Activated CD8-positive, alpha-beta T cell treated with anti-CD3 and anti-CD28 coated beads, Interleukin-2, amount 10 ng/mL, durations not matched to agents 7 days and 5 days (primary cell): ENCODE measurements at regions of chr6 and their contacts with region 1.

Region 1: DNA sequence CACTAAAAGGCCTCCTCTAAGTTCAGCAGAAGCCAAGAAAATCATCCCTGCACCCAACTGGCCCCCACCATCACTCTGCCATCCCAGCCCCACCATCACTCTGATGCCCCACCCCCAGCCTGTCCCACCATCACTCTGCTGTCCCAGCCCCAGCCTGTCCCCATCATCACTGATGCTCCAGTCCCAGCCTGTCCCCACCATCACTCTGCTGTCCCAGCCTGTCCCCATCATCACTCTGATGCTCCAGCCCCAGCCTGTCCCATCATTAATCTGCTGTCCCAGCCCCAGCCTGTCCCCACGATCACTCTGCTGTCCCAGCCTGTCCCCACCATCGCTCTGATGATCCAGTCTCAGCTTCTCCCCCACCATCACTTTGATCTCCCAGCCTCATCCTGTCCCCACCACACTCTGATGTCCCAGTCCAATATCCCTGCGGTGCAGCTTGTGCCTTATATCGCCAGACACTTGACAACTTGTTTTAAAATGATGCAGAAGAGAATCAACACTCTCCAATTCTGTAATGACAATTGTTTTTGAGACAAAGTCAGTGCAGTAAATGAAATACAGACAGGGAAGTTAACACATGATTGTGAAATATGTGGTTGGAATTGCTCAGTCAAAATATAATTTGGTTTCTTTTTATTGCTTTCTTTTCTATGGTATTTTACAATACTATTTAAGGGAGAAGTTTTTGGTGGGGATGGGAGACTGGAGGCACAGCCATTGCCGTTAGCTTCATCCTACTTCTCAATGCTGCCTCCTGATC is 100.8 kb downstream of the TNFAIP3 start:
- DNase-seq: no peak
- ATAC-seq: peak; percentile 25
- H3K4me3 Mint-ChIP-seq: no peak overlapping the region
- H3K27ac Mint-ChIP-seq: peak overlapping the region; percentile 64
- H3K4me1 Mint-ChIP-seq: peaks cover 47% of the 10 kb centered on the region
- H3K27me3 Mint-ChIP-seq: no peaks in the 10 kb centered on the region

Region 2: DNA sequence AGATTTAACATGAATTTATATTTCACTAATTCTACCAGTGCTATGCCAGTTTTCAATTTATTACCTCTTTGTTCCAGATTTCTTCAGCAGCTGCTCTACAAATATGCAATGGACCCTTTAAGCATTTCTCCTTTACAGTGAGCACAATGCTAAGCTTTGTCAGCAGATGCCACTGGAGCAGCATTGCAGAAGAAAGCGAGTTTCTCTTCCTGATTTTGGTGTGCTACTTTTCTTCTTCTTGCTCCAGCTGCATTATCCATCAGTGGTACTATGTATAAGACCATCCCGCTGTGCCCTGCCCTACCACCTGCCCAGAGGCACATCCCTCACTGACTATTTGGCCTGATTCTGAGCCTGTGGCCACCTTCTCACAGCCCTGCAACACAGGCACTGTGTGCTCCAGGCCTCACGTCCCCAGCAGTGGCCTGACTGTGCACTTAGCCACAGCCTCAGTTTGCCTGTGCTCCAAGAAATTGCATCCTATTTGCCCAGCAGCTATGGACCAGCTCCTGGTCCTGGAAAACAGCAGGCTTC is 16.7 kb before region 1 on chr6:
- CTCF ChIA-PET with region 1: interaction called, 15 read pairs
- POLR2A ChIA-PET with region 1: interaction called, 6 read pairs
- DNase-seq: no peak
- ATAC-seq: no peak
- H3K4me3 Mint-ChIP-seq: no peak overlapping the region
- H3K27ac Mint-ChIP-seq: peak overlapping the region; percentile 31
- H3K4me1 Mint-ChIP-seq: peaks cover 16% of the 10 kb centered on the region
- H3K27me3 Mint-ChIP-seq: peaks cover 4% of the 10 kb centered on the region